ENCODE measurements at regions of chr15 and their contacts with region 1.

Region 1: GRCh38 chr15:35325374-35325941 is 220.5 kb downstream of the DPH6 start:
- DNase-seq: no peak
- H3K4me3 ChIP-seq: no peak overlapping the region
- H3K27ac ChIP-seq: no peak overlapping the region
- H3K4me1 ChIP-seq: no peaks in the 10 kb centered on the region
- CTCF ChIP-seq: no peak

Region 2: DNA sequence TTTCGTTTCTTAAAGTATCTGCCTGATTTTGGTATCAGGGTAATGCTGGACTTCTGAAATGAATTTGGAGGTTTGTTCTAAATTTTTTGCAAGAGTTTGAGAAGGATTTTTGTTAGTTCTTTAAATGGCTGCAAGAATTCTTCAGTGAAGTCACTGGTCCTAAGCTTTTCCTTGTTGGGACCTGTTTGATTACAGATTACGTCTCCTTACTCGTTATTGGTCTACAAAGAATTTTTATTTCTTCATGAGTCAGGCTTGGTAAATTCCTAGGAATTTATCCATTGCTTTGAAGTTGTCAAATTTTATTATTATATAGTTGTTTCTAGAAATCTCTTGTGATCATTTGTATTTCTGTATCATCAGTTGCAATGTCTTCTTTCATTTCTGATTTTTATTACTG is 24.5 kb after region 1 on chr15:
- CTCF ChIA-PET with region 1: no interaction called
- POLR2A ChIA-PET with region 1: no interaction called
- intact Hi-C with region 1: no loop called
- DNase-seq: no peak
- H3K4me3 ChIP-seq: no peak overlapping the region
- H3K27ac ChIP-seq: no peak overlapping the region
- H3K4me1 ChIP-seq: no peaks in the 10 kb centered on the region
- CTCF ChIP-seq: no peak

Region 3: GRCh38 chr15:35362195-35362829 is 36.9 kb after region 1 on chr15:
- CTCF ChIA-PET with region 1: no interaction called
- POLR2A ChIA-PET with region 1: no interaction called
- intact Hi-C with region 1: loop called (anchors 1 kb)
- DNase-seq: no peak
- H3K4me3 ChIP-seq: no peak overlapping the region
- H3K27ac ChIP-seq: no peak overlapping the region
- H3K4me1 ChIP-seq: no peaks in the 10 kb centered on the region
- CTCF ChIP-seq: no peak